ENCODE measurements at regions of chr7 and their contacts with region 1.

Region 1: DNA sequence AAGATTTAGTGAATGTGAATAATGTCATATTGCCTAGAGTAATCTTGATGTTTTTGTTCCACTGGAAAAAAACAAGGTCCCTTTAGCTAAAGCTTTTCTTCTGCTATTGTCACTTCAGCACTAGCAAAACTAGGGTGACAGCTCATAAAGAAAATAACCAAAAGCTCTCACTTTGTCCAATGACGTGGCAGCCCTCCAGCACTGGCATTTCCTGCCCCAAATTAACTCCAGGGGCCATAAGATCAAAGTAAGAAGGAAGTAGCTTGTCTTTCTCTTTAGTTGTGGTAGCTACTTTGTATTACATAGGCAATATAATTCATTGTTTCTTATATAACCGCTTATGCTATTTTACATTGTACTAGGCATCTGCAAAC is 47.3 kb downstream of the LRRN3 start:
- DNase-seq: peak; percentile 16
- ATAC-seq: peak; percentile 77
- H3K4me3 Mint-ChIP-seq: peak overlapping the region; percentile 73
- H3K27ac Mint-ChIP-seq: peak overlapping the region; percentile 94
- H3K4me1 Mint-ChIP-seq: peaks cover 28% of the 10 kb centered on the region
- H3K27me3 Mint-ChIP-seq: no peaks in the 10 kb centered on the region
- CTCF ChIP-seq: no peak

Region 2: GRCh38 chr7:111103678-111104274 is 34.4 kb before region 1 on chr7:
- CTCF ChIA-PET with region 1: interaction called, 9 read pairs
- POLR2A ChIA-PET with region 1: interaction called, 4 read pairs
- intact Hi-C with region 1: loop called (anchors 1 kb)
- DNase-seq: no peak
- ATAC-seq: peak; percentile 52
- H3K4me3 Mint-ChIP-seq: peak overlapping the region; percentile 39
- H3K27ac Mint-ChIP-seq: peak overlapping the region; percentile 86
- H3K4me1 Mint-ChIP-seq: peaks cover 35% of the 10 kb centered on the region
- H3K27me3 Mint-ChIP-seq: no peaks in the 10 kb centered on the region
- CTCF ChIP-seq: no peak

Region 3: DNA sequence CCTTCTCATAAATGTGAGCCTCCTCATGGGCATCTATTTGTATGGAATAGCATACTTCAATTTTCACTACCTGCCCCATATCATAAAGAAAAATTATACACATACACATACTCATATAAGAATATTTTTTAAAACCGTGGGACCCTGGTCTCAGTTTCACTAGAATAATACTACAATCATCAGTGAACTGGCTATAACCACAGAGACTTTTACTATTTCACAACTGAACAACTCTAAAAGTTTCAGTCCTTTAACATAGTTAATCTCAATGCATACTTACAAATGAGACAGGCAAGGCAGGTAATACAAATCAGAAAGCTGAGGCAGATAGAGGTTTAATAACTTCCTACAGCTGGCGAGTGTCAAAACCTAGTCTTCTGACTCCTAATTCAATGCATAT is 35.8 kb after region 1 on chr7:
- CTCF ChIA-PET with region 1: no interaction called
- POLR2A ChIA-PET with region 1: no interaction called
- intact Hi-C with region 1: no loop called
- DNase-seq: no peak
- ATAC-seq: no peak
- H3K4me3 Mint-ChIP-seq: no peak overlapping the region
- H3K27ac Mint-ChIP-seq: no peak overlapping the region
- H3K4me1 Mint-ChIP-seq: no peaks in the 10 kb centered on the region
- H3K27me3 Mint-ChIP-seq: no peaks in the 10 kb centered on the region
- CTCF ChIP-seq: no peak

Region 4: GRCh38 chr7:111324228-111324627 is 186.0 kb after region 1 on chr7:
- CTCF ChIA-PET with region 1: no interaction called
- POLR2A ChIA-PET with region 1: no interaction called
- intact Hi-C with region 1: loop called (anchors 1 kb)
- DNase-seq: no peak
- ATAC-seq: peak; percentile 71
- H3K4me3 Mint-ChIP-seq: peak overlapping the region; percentile 19
- H3K27ac Mint-ChIP-seq: peak overlapping the region; percentile 66
- H3K4me1 Mint-ChIP-seq: peaks cover 38% of the 10 kb centered on the region
- H3K27me3 Mint-ChIP-seq: no peaks in the 10 kb centered on the region
- CTCF ChIP-seq: no peak

Measured in activated B cell treated with CpG ODN at 0.5 μM for 24 hours (primary cell).